ENCODE measurements at regions of chr4 and their contacts with region 1.

Region 1: GRCh38 chr4:101439926-101440325 is 92.6 kb upstream of the PPP3CA start:
- DNase-seq: no peak
- H3K4me3 ChIP-seq: no peak overlapping the region
- H3K4me3 Mint-ChIP-seq: no peak overlapping the region
- H3K27ac Mint-ChIP-seq: no peak overlapping the region
- H3K4me1 ChIP-seq: no peaks in the 10 kb centered on the region
- H3K4me1 Mint-ChIP-seq: no peaks in the 10 kb centered on the region
- H3K27me3 ChIP-seq: no peaks in the 10 kb centered on the region
- H3K27me3 Mint-ChIP-seq: no peaks in the 10 kb centered on the region
- CTCF ChIP-seq: no peak

Region 2: GRCh38 chr4:101135371-101136010 is 304.4 kb before region 1 on chr4:
- CTCF ChIA-PET with region 1: no interaction called
- POLR2A ChIA-PET with region 1: no interaction called
- intact Hi-C with region 1: no loop called
- DNase-seq: no peak
- H3K4me3 ChIP-seq: no peak overlapping the region
- H3K4me3 Mint-ChIP-seq: no peak overlapping the region
- H3K27ac Mint-ChIP-seq: no peak overlapping the region
- H3K4me1 ChIP-seq: no peaks in the 10 kb centered on the region
- H3K4me1 Mint-ChIP-seq: no peaks in the 10 kb centered on the region
- H3K27me3 ChIP-seq: no peaks in the 10 kb centered on the region
- H3K27me3 Mint-ChIP-seq: no peaks in the 10 kb centered on the region
- CTCF ChIP-seq: no peak

Region 3: DNA sequence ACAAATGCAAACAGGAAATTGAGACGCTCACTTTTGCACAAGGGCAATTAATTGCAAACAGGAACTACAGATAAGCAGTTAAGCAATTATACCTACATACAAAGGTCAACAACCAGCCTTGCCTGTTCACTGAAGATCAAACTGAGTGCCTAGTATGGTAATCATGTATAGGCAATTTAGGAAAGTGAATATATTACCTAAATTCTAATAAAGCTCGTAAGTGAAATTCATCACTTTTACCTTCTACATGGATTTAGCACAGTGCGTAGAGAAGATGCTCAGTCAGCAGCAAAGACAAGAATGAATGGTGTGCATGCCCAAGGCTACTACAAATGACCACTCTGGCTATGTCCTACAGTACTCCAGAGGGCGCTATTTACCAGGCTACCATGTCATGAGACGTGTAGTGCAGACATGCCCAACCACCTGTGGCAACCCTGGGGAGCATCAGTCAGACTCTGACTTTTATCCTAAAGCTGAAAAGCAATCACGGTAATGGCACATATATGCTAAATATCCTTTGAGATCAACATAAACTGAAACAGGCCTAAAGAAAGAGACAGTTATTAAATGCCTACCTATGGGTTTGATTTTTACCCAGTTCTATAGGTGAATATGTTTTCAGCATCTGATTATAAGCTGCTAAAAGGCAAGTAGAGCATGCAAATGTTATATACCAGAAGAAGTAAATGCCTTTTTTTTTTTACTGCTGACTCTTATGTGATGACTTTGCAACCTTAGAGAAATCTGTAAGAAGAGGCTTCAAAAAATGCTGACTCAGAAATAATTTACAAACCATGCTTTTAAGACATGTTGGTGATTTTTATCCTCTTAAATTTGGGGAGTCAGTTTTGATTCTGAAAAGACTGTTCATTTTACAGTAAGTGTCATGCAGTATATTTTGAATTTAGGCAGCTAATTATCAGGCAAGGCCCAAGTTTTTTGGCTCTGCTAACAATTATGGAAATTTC is 270.6 kb before region 1 on chr4:
- CTCF ChIA-PET with region 1: no interaction called
- POLR2A ChIA-PET with region 1: no interaction called
- intact Hi-C with region 1: loop called (anchors 10 kb)
- DNase-seq: peak; percentile 75 to 76
- H3K4me3 ChIP-seq: no peak overlapping the region
- H3K4me3 Mint-ChIP-seq: no peak overlapping the region
- H3K27ac Mint-ChIP-seq: no peak overlapping the region
- H3K4me1 ChIP-seq: peaks cover 10% of the 10 kb centered on the region; the same call in 1 of the 2 replicates
- H3K4me1 Mint-ChIP-seq: peaks cover 6% of the 10 kb centered on the region
- H3K27me3 ChIP-seq: no peaks in the 10 kb centered on the region
- H3K27me3 Mint-ChIP-seq: no peaks in the 10 kb centered on the region
- CTCF ChIP-seq: peak; percentile 71 to 72

Region 4: GRCh38 chr4:101500742-101501141 is 60.8 kb after region 1 on chr4:
- CTCF ChIA-PET with region 1: no interaction called
- POLR2A ChIA-PET with region 1: no interaction called
- intact Hi-C with region 1: no loop called
- DNase-seq: no peak
- H3K4me3 ChIP-seq: no peak overlapping the region
- H3K4me3 Mint-ChIP-seq: no peak overlapping the region
- H3K27ac Mint-ChIP-seq: no peak overlapping the region
- H3K4me1 ChIP-seq: no peaks in the 10 kb centered on the region
- H3K4me1 Mint-ChIP-seq: no peaks in the 10 kb centered on the region
- H3K27me3 ChIP-seq: no peaks in the 10 kb centered on the region
- H3K27me3 Mint-ChIP-seq: no peaks in the 10 kb centered on the region
- CTCF ChIP-seq: no peak